OCI-LY7 (cell line): ENCODE measurements at regions of chr14 and their contacts with region 1.

Region 1: DNA sequence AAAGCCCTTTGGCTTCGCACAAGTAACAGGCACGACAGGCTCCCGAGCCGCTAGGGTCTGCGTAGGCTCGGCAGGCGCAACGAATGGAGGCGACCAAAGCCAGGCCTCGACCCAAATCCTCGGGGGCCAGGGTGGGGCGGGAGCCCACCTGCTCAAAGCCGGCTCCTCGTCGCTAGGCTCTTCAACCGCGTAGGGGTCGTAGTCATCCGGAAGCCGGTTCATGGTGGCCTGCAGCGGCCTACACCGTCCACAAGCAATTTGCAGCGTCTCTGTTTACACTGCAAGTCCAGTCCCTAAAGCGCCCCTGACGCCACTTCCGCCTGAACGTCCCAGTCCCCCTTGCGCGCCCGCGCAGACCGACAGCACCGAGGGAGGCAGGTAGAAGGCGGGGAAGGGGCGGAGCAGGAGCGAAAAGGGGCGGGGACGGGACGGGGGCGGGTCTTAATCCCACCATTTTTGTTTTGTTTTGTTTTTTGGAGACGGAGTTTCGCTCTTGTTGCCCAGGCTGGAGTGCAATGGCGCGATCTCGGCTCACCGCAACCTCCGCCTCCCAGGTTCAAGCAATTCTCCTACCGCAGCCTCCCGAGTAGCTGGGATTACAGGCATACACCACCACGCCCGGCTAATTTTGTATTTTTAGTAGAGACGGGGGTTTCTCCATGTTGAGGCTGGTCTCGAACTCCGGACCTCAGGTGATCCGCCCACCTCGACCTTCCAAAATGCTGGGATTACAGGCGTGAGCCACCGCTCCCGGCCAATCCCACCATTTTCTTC is at the start of gene EAPP:
- DNase-seq: peak; percentile 96
- H3K4me3 ChIP-seq: peak within 1 kb of the TSS; percentile 99
- H3K27ac ChIP-seq: peak within 1 kb of the TSS; percentile 54
- H3K4me1 ChIP-seq: peaks cover 16% of the 10 kb centered on the region
- CTCF ChIP-seq: no peak
- total RNA-seq, gene EAPP: 27.5 and 35.8 TPM in 2 replicates

Region 2: GRCh38 chr14:34461334-34462131 is 78.1 kb before region 1 on chr14:
- CTCF ChIA-PET with region 1: interaction called, 5 read pairs
- POLR2A ChIA-PET with region 1: no interaction called
- intact Hi-C with region 1: loop called (anchors 5 kb)
- DNase-seq: peak; percentile 11
- H3K4me3 ChIP-seq: peak overlapping the region; percentile 75
- H3K27ac ChIP-seq: peak overlapping the region; percentile 54
- H3K4me1 ChIP-seq: peaks cover 25% of the 10 kb centered on the region
- CTCF ChIP-seq: no peak

Region 3: GRCh38 chr14:34482468-34482867 is 57.1 kb before region 1 on chr14:
- CTCF ChIA-PET with region 1: no interaction called
- POLR2A ChIA-PET with region 1: no interaction called
- intact Hi-C with region 1: no loop called
- DNase-seq: no peak
- H3K4me3 ChIP-seq: no peak overlapping the region
- H3K27ac ChIP-seq: no peak overlapping the region
- H3K4me1 ChIP-seq: no peaks in the 10 kb centered on the region
- CTCF ChIP-seq: no peak